CD4-positive, alpha-beta T cell (primary cell): ENCODE measurements at regions of chr16 and their contacts with region 1.

Region 1: DNA sequence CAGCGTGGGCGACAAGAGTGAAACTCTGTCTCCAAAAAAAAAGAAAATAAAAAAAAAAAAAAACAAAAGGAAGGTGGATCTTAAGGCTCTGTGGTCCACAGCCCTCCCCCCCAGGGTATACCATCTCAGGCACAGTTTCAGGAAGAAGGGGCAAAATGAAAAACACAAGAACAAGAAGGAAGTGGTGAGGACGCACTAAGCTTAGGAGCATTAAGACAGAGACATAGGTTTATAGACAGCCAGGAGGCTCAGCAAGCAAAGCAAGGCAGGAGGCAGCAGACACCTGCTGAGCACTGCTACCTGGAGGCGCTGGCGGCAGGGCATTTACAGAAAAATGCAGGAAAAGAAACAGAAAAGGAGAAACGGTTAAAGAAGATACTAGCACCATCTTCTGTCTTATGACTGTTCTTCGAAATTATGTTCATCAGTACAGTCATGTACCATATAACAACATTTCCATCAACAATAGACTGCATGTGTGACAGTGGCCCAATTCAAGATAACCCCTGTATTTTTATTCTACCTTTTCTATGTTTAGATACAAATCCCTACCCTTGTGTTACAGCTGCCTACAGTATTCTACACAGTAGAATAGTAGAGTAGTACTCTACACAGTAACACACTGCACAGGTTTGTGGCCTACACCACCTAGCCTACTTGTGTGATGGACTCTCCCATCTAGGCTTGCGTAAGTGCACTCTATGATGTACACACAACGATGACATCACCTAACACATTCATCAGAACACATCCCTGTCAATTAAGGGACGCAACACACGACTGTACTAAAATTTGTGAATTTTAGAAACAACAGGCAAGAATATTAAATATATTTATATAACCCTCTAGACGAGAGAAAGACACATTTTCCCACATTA is 62.5 kb downstream of the XPO6 start:
- DNase-seq: peak in 12 of 14 experiments; percentile 14 to 76 (median 48)
- ATAC-seq: peak; percentile 90
- H3K4me3 ChIP-seq: no peak overlapping the region
- H3K4me3 Mint-ChIP-seq: peak overlapping the region; percentile 42
- H3K27ac ChIP-seq: peak overlapping the region; percentile 60 to 74
- H3K27ac Mint-ChIP-seq: peak overlapping the region; percentile 97
- H3K4me1 ChIP-seq: peaks cover 42% of the 10 kb centered on the region
- H3K4me1 Mint-ChIP-seq: peaks cover 83% of the 10 kb centered on the region
- H3K27me3 ChIP-seq: no peaks in the 10 kb centered on the region
- H3K27me3 Mint-ChIP-seq: no peaks in the 10 kb centered on the region
- CTCF ChIP-seq: peak; percentile 27

Region 2: DNA sequence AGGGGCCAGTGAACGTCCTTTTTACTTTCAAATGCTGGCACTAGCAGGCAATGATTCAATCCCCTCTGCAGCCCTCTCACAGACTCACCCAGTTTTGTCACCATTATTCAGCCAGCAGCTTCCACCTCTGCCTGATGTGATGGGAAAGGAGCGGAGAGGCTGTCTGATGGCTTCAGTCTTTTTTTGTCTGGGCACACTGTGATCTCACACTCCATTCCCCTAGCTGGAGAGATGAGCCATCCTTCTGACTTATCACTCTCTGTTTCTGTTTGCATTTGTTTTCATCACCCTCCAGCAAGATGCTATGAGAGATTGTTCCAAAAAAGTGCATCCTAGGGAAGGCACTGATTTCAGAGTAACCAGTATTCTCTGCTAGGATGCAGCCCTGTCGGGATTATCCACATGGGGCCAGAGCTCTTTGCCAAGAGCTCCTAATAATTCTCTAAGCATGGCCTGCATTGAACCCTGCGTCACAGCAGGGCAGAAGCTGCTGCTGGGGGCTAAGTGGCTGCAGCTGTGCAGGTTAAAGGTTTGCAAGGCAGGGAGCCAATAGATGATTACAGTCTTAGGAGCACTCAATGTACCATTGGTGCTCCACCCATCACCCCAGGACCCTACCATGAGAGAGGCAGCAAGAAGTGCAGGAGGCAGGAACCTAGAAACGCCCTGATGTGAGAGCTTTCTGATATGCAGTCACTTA is 1318.7 kb before region 1 on chr16:
- CTCF ChIA-PET with region 1: no interaction called
- POLR2A ChIA-PET with region 1: no interaction called
- intact Hi-C with region 1: no loop called
- DNase-seq: no peak
- ATAC-seq: no peak
- H3K4me3 ChIP-seq: no peak overlapping the region
- H3K4me3 Mint-ChIP-seq: no peak overlapping the region
- H3K27ac ChIP-seq: no peak overlapping the region
- H3K27ac Mint-ChIP-seq: no peak overlapping the region
- H3K4me1 ChIP-seq: no peaks in the 10 kb centered on the region
- H3K4me1 Mint-ChIP-seq: no peaks in the 10 kb centered on the region
- H3K27me3 ChIP-seq: peaks cover 5 to 12% of the 10 kb centered on the region in 2 experiments
- H3K27me3 Mint-ChIP-seq: peaks cover 29% of the 10 kb centered on the region
- CTCF ChIP-seq: no peak

Region 3: DNA sequence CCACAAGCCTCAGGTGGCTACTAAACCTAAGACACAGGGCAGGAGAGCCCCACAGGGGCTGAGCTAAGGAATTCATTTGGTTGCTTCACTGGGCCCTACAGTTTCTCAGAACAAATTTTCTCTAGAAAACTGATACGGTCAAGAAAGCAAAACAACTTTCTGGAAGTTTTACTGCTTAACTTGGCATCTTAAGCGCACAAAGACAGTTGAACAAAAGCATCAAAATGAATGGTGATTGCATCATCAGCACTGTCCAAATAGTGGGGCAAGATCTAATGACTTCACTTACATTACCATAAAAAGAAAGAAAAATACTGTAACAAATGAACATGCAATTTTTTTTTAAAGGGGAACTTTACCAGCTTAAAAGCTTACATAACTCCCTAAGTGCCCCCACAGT is 14.9 kb after region 1 on chr16:
- CTCF ChIA-PET with region 1: interaction called, 3 read pairs
- POLR2A ChIA-PET with region 1: interaction called, 5 read pairs
- intact Hi-C with region 1: loop called (anchors 2 kb)
- DNase-seq: no peak
- ATAC-seq: no peak
- H3K4me3 ChIP-seq: no peak overlapping the region
- H3K4me3 Mint-ChIP-seq: peak overlapping the region; percentile 15
- H3K27ac ChIP-seq: peak overlapping the region in 1 of 2 donors; percentile 31
- H3K27ac Mint-ChIP-seq: peak overlapping the region; percentile 87
- H3K4me1 ChIP-seq: peaks cover 49% of the 10 kb centered on the region
- H3K4me1 Mint-ChIP-seq: peaks cover 95% of the 10 kb centered on the region
- H3K27me3 ChIP-seq: no peaks in the 10 kb centered on the region
- H3K27me3 Mint-ChIP-seq: no peaks in the 10 kb centered on the region
- CTCF ChIP-seq: no peak

Region 4: DNA sequence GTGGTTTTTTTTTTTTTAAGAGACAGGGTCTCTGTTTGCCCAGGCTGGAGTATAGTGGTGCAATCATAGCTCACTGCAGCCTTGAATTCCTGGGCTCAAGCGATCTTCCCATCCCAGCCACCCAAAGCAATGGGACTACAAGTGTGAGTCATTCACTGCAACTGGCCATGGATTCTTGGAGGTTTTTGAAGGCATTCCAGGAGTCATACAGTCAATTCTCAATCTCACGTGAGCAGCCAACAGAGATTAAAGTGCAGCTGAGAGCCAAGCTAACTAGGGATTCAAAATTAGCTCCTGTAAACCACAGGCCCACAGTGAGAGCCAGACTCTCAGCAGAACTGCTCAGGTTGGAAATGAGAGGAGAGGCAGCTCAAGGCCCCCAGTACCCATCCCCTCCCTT is 32.3 kb after region 1 on chr16:
- CTCF ChIA-PET with region 1: interaction called, 3 read pairs
- POLR2A ChIA-PET with region 1: interaction called, 4 read pairs
- intact Hi-C with region 1: loop called in 1 of 2 experiments (anchors 5 kb)
- DNase-seq: no peak
- ATAC-seq: no peak
- H3K4me3 ChIP-seq: no peak overlapping the region
- H3K4me3 Mint-ChIP-seq: peak overlapping the region; percentile 69
- H3K27ac ChIP-seq: peak overlapping the region; percentile 18 to 52
- H3K27ac Mint-ChIP-seq: peak overlapping the region; percentile 85
- H3K4me1 ChIP-seq: peaks cover 63% of the 10 kb centered on the region
- H3K4me1 Mint-ChIP-seq: peaks cover 93% of the 10 kb centered on the region
- H3K27me3 ChIP-seq: no peaks in the 10 kb centered on the region
- H3K27me3 Mint-ChIP-seq: no peaks in the 10 kb centered on the region
- CTCF ChIP-seq: no peak